ENCODE measurements at regions of chrX and their contacts with region 1.

Region 1: GRCh38 chrX:10098270-10098713 is 58.5 kb upstream of the CLCN4 start:
- DNase-seq: peak; percentile 79
- ATAC-seq: peak; percentile 61
- H3K4me3 Mint-ChIP-seq: peak overlapping the region; percentile 83
- H3K27ac Mint-ChIP-seq: peak overlapping the region; percentile 97
- H3K4me1 Mint-ChIP-seq: peaks cover 48% of the 10 kb centered on the region
- H3K27me3 Mint-ChIP-seq: no peaks in the 10 kb centered on the region
- CTCF ChIP-seq: no peak

Region 2: DNA sequence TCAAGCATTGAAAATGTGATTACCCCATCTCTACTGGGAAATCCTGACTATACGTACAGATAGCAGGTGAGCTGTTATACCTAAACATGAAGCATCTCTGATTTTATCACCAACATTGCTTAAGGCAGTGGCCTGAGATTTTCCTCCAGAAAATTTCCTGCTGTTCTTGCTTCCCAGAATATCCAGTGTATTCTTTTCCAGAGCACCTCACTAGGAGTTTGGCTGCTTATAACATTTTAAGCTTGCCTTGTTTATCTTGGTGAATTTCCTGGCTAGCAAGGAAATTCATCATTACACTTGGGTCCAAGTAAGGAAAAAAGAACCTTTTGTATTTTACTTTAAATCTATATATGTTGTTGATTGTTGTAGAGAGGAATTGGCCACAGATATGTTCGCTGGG is 14.5 kb before region 1 on chrX:
- CTCF ChIA-PET with region 1: interaction called, 12 read pairs
- POLR2A ChIA-PET with region 1: interaction called, 9 read pairs
- intact Hi-C with region 1: no loop called
- DNase-seq: no peak
- ATAC-seq: no peak
- H3K4me3 Mint-ChIP-seq: no peak overlapping the region
- H3K27ac Mint-ChIP-seq: no peak overlapping the region
- H3K4me1 Mint-ChIP-seq: peaks cover 50% of the 10 kb centered on the region
- H3K27me3 Mint-ChIP-seq: no peaks in the 10 kb centered on the region
- CTCF ChIP-seq: no peak

Region 3: GRCh38 chrX:10111364-10112148 is 13.3 kb after region 1 on chrX:
- CTCF ChIA-PET with region 1: interaction called, 29 read pairs
- POLR2A ChIA-PET with region 1: interaction called, 53 read pairs
- intact Hi-C with region 1: loop called (anchors 2 kb)
- DNase-seq: peak; percentile 78
- ATAC-seq: peak; percentile 68
- H3K4me3 Mint-ChIP-seq: peak overlapping the region; percentile 75
- H3K27ac Mint-ChIP-seq: peak overlapping the region; percentile 99
- H3K4me1 Mint-ChIP-seq: peaks cover 70% of the 10 kb centered on the region
- H3K27me3 Mint-ChIP-seq: no peaks in the 10 kb centered on the region
- CTCF ChIP-seq: no peak

Region 4: DNA sequence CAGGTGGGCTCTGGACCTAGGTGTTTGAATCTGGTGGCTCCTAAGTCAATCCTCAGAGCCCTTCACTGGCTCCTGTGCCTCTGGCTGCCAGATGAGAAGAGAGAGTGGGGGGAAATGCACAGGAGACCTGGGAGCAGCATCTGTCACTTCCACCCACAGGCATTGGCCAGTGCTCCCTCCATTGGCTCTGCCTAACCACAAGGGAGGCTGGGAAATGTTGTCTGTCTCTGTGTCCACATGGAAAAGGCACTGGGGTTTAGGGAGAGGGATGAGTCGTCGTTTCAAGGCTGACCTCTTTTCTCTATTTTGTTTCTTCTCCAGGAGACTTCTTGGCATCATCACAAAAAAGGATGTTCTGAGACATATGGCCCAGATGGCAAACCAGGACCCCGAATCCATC is 134.9 kb after region 1 on chrX:
- CTCF ChIA-PET with region 1: no interaction called
- POLR2A ChIA-PET with region 1: no interaction called
- intact Hi-C with region 1: no loop called
- DNase-seq: no peak
- ATAC-seq: no peak
- H3K4me3 Mint-ChIP-seq: no peak overlapping the region
- H3K27ac Mint-ChIP-seq: no peak overlapping the region
- H3K4me1 Mint-ChIP-seq: no peaks in the 10 kb centered on the region
- H3K27me3 Mint-ChIP-seq: no peaks in the 10 kb centered on the region
- CTCF ChIP-seq: no peak